Caco-2 (cell line): ENCODE measurements at regions of chr11 and their contacts with region 1.

Region 1: GRCh38 chr11:10735481-10736475 is 15.3 kb upstream of the CTR9 start:
- DNase-seq: peak; percentile 97
- H3K4me3 ChIP-seq: peak overlapping the region; percentile 6
- H3K4me3 Mint-ChIP-seq: peak overlapping the region; percentile 52
- H3K27ac Mint-ChIP-seq: peak overlapping the region; percentile 24
- H3K4me1 ChIP-seq: peaks cover 19% of the 10 kb centered on the region
- H3K4me1 Mint-ChIP-seq: peaks cover 32% of the 10 kb centered on the region
- H3K27me3 ChIP-seq: no peaks in the 10 kb centered on the region
- H3K27me3 Mint-ChIP-seq: no peaks in the 10 kb centered on the region
- CTCF ChIP-seq: peak; percentile 97 to 98

Region 2: GRCh38 chr11:10405855-10406592 is 329.8 kb before region 1 on chr11:
- CTCF ChIA-PET with region 1: interaction called, 9 read pairs
- POLR2A ChIA-PET with region 1: no interaction called
- intact Hi-C with region 1: loop called (anchors 1 kb)
- DNase-seq: peak; percentile 80 to 84
- H3K4me3 ChIP-seq: no peak overlapping the region
- H3K4me3 Mint-ChIP-seq: no peak overlapping the region
- H3K27ac Mint-ChIP-seq: peak overlapping the region; percentile 74
- H3K4me1 ChIP-seq: peaks cover 14% of the 10 kb centered on the region
- H3K4me1 Mint-ChIP-seq: peaks cover 16% of the 10 kb centered on the region
- H3K27me3 ChIP-seq: no peaks in the 10 kb centered on the region
- H3K27me3 Mint-ChIP-seq: no peaks in the 10 kb centered on the region
- CTCF ChIP-seq: peak; percentile 74 to 81

Region 3: DNA sequence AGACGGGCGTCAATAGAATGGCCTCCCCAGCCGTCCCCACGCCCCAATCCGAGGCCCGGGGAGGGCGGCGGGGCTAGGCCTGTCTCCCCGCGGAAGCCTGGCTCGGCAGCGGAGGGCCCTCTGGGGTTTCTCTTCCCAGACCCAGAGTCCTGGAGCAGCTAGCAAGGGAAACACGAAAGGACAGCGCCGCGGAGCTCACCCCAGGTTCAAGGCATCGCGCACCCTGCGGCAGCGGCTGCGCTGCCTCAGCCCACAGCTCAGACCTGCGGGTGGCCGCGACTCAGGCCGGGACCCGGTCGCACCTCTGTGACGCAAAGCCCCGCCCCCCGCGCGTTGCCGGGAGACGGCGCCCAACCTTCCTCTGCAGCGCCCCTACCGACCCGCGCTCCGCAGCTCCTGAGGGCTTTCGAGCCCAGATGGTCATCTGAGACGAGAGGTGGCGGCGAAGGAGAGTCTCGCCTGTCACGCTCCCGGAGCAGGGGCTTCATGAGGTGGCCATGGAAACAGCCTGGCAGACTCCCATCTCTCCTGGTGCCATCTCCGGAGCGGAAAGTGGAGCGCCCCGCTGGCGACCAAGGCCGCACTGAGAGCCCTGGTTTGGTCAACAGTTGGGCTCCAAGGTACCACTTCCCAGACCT is 194.7 kb before region 1 on chr11 and contains the start of gene RNF141:
- CTCF ChIA-PET with region 1: interaction called, 4 read pairs
- POLR2A ChIA-PET with region 1: no interaction called
- intact Hi-C with region 1: loop called (anchors 1 kb)
- DNase-seq: peak; percentile 95 to 99
- H3K4me3 ChIP-seq: peak within 1 kb of the TSS; percentile 78
- H3K4me3 Mint-ChIP-seq: peak within 1 kb of the TSS; percentile 73
- H3K27ac Mint-ChIP-seq: peak within 1 kb of the TSS; percentile 79
- H3K4me1 ChIP-seq: peaks cover 19% of the 10 kb centered on the region
- H3K4me1 Mint-ChIP-seq: peaks cover 7% of the 10 kb centered on the region
- H3K27me3 ChIP-seq: no peaks in the 10 kb centered on the region
- H3K27me3 Mint-ChIP-seq: no peaks in the 10 kb centered on the region
- CTCF ChIP-seq: peak; percentile 87 to 90
- total RNA-seq, gene RNF141: 65.2 and 74.8 TPM in 2 replicates

Region 4: DNA sequence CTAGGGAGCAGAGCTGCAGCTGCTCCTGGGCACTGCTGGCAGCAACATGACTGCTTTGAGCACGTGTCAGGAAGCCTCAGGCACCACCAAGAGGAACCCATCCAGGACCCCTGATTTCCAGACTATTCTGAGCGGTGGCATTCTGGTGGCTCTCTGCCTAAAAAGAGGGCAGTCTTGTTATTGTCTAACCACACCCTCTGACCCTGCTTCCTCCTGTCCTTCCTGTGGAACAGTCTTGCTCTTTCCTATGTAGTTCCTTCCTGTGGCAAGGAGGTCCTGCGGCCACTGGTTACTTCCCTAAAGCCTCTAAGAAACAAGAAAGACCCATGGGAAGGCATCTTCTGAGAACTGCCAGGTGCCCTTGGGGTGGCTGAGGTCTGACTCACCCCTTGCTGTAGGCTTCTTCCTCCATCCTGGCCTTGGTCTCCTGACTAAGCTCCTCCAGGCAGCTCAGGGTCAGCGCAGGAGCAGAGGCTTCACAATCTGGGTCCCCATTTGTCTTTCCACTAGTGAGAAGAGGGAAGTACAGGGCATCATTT is 154.2 kb before region 1 on chr11:
- CTCF ChIA-PET with region 1: no interaction called
- POLR2A ChIA-PET with region 1: no interaction called
- intact Hi-C with region 1: no loop called
- DNase-seq: no peak
- H3K4me3 ChIP-seq: no peak overlapping the region
- H3K4me3 Mint-ChIP-seq: no peak overlapping the region
- H3K27ac Mint-ChIP-seq: no peak overlapping the region
- H3K4me1 ChIP-seq: peaks cover 12% of the 10 kb centered on the region; the same call in 1 of the 2 replicates
- H3K4me1 Mint-ChIP-seq: peaks cover 17% of the 10 kb centered on the region
- H3K27me3 ChIP-seq: no peaks in the 10 kb centered on the region
- H3K27me3 Mint-ChIP-seq: no peaks in the 10 kb centered on the region
- CTCF ChIP-seq: no peak

Region 5: DNA sequence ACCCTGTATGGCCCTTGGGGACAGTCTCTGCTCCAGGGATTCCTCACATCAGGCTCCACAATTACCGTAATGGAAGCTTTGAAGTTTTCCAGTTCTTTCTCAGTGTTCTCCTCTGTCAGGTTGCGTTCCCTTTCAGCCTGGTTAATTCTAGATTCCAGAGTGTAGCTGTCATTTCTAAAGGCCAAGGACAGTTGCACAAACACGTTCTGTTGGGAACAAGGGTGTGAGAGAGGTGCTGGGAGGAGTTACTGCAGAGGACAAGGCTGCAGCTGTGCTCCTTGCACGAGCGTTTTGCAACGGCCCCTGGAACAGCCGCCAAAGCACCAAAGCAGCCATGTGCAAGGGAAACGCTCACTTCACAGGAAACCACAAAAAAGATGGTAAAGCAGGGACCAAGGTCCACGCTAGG is 131.4 kb before region 1 on chr11:
- CTCF ChIA-PET with region 1: no interaction called
- POLR2A ChIA-PET with region 1: no interaction called
- intact Hi-C with region 1: no loop called
- DNase-seq: no peak
- H3K4me3 ChIP-seq: no peak overlapping the region
- H3K4me3 Mint-ChIP-seq: no peak overlapping the region
- H3K27ac Mint-ChIP-seq: no peak overlapping the region
- H3K4me1 ChIP-seq: no peaks in the 10 kb centered on the region
- H3K4me1 Mint-ChIP-seq: no peaks in the 10 kb centered on the region
- H3K27me3 ChIP-seq: no peaks in the 10 kb centered on the region
- H3K27me3 Mint-ChIP-seq: no peaks in the 10 kb centered on the region
- CTCF ChIP-seq: no peak

Region 6: DNA sequence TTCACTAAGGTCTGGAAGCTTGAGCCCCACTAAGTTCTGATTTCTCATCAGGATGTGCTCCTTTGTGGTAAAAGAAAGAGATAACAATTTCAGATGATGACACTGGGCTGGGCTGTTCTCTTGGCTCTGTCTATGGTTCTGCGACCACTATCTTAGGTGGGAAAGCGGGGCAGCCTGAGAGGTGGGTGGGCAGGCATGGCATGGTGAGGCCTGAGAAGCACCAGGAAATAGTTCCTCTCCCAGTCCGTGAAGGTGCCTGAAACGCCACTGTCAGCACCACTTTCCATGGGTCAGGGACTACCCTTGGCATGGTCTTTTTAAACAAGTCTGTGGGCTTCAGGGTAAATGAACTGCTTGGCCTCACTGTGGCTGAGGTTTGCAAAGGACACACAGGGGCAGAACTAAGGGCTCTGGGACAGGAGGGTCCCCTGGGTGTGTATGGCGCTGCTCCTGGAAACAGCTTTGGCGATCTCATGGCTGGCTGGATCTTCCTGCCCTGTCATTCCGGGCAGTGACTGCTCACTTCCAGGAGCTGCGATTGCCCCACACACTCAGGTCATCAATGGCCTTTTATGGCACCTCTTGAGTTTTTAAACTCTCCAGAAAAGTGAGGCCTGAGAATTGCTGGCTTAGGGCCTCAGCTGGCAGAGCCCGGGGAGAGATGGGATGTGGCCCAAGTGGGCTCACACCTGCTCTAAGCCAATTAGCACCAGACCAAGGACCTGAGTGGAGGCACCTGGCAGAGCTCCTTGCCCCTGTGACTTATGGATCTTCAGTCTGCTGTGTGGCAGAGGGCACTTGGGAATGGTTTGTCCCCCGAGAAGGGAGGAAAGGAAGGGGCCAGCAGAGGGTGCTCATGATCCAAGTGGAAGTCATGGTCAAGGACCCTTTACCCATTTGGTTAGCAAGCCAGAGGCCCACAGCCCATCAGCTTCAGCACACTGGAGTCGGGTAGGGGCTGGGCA is 111.7 kb before region 1 on chr11:
- CTCF ChIA-PET with region 1: interaction called, 16 read pairs
- POLR2A ChIA-PET with region 1: no interaction called
- intact Hi-C with region 1: loop called (anchors 1 kb)
- DNase-seq: peak; percentile 81 to 82
- H3K4me3 ChIP-seq: no peak overlapping the region
- H3K4me3 Mint-ChIP-seq: no peak overlapping the region
- H3K27ac Mint-ChIP-seq: no peak overlapping the region
- H3K4me1 ChIP-seq: peaks cover 14% of the 10 kb centered on the region
- H3K4me1 Mint-ChIP-seq: no peaks in the 10 kb centered on the region
- H3K27me3 ChIP-seq: no peaks in the 10 kb centered on the region
- H3K27me3 Mint-ChIP-seq: no peaks in the 10 kb centered on the region
- CTCF ChIP-seq: peak; percentile 79 to 83

Region 7: GRCh38 chr11:10716127-10716526 is 19.7 kb before region 1 on chr11:
- CTCF ChIA-PET with region 1: no interaction called
- POLR2A ChIA-PET with region 1: no interaction called
- intact Hi-C with region 1: no loop called
- DNase-seq: no peak
- H3K4me3 ChIP-seq: no peak overlapping the region
- H3K4me3 Mint-ChIP-seq: no peak overlapping the region
- H3K27ac Mint-ChIP-seq: no peak overlapping the region
- H3K4me1 ChIP-seq: peaks cover 8% of the 10 kb centered on the region
- H3K4me1 Mint-ChIP-seq: no peaks in the 10 kb centered on the region
- H3K27me3 ChIP-seq: no peaks in the 10 kb centered on the region
- H3K27me3 Mint-ChIP-seq: no peaks in the 10 kb centered on the region
- CTCF ChIP-seq: no peak

Region 8: GRCh38 chr11:10778217-10778970 is 42.6 kb after region 1 on chr11:
- CTCF ChIA-PET with region 1: no interaction called
- POLR2A ChIA-PET with region 1: no interaction called
- intact Hi-C with region 1: no loop called
- DNase-seq: no peak
- H3K4me3 ChIP-seq: no peak overlapping the region
- H3K4me3 Mint-ChIP-seq: no peak overlapping the region
- H3K27ac Mint-ChIP-seq: no peak overlapping the region
- H3K4me1 ChIP-seq: no peaks in the 10 kb centered on the region
- H3K4me1 Mint-ChIP-seq: no peaks in the 10 kb centered on the region
- H3K27me3 ChIP-seq: no peaks in the 10 kb centered on the region
- H3K27me3 Mint-ChIP-seq: no peaks in the 10 kb centered on the region
- CTCF ChIP-seq: no peak